ENCODE measurements at regions of chr17 and their contacts with region 1.

Region 1: DNA sequence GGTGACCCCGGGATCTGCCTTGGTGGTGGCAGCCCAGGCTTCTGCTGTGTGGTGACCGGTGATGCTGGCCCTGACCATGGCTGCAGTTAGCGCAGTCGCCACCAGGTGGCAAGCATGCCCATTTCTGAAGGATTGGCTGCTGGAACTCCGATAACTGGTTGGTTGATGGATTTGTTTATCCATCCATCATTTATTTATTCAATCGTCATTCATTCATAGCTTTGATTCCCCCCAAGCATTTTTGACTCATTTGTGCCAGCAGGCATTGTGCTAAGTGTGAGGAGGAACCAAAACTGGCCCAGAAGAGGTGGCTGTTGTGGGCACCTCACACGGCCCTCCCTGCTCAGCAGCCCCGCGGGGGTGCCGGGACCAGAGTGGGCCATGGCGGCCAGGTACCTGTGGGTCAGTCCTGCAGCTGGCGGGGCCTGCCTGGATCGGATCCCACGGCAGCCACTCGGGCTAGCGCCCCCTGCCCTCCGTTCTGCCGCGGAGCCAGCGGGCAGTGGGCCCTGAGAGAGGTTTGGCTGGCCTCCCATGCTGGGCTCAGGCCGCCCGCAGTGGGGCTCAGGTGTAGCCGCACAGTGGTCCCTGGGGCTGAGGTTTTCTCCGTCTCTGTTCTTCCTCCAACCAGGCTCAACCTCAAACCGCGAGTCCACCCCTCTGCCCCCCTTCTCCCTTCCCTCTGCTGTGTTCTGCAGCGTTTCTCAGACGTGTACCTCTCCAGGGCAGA is 28.8 kb upstream of the ITGA3 start:
- DNase-seq: peak; percentile 88
- H3K4me3 ChIP-seq: peak overlapping the region in 2 of 4 donors; percentile 13 to 18
- H3K27ac ChIP-seq: peak overlapping the region in 3 of 4 donors; percentile 15 to 58 (median 50)
- H3K4me1 ChIP-seq: peaks cover 0 to 15% (median 9%) of the 10 kb centered on the region in 4 donors
- H3K27me3 ChIP-seq: no peaks in the 10 kb centered on the region
- CTCF ChIP-seq: peak; percentile 94 to 98 (median 96)
- EP300 ChIP-seq: no peak
- POLR2A ChIP-seq: no peak

Region 2: DNA sequence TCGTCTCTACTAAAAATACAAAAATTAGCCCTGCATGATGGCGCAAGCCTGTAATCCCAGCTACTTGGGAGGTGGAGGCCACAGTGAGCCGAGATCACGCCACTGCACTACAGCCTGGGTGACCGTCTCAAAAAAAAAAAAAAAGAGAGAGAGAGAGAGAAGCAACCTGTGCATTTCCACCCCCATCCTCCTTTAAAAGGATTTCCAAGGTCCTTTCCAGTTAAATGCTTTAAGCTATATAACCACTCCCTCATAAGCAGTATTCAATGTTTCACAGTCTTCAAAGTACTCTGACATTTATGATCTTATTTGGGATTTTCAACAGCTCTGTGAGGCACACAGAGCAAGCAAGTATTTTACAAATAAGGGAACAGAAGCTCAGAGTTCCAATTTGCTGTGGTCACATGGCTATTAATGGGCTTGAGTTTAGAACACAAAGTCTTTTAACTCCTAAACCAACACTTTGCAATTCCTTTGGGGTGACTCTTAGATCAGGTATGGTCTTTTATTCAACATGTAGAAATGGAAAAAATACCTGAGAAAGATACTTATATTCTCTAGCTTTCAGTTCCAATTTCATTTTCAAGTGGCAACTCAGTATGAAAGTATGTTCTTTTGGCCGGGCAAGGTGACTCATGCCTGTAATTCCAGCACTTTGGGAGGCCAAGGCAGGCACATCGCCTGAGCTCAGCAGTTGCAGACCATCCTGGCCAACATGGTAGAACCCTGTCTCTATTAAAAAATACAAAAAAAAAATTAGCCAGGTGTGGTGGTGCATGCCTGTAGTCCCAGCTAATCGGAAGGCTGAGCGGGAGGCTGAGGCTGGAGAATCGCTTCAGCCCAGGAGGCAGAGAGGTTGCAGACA is 380.4 kb before region 1 on chr17:
- in situ Hi-C with region 1: no loop called
- intact Hi-C with region 1: no loop called
- DNase-seq: peak; percentile 24
- H3K4me3 ChIP-seq: peak overlapping the region in 1 of 4 donors; percentile 20
- H3K27ac ChIP-seq: peak overlapping the region; percentile 74 to 85 (median 81)
- H3K4me1 ChIP-seq: peaks cover 0 to 34% (median 14%) of the 10 kb centered on the region in 4 donors
- H3K27me3 ChIP-seq: no peaks in the 10 kb centered on the region
- CTCF ChIP-seq: no peak
- EP300 ChIP-seq: peak; percentile 61
- POLR2A ChIP-seq: peak; percentile 24

Region 3: GRCh38 chr17:50087246-50087911 is 60.3 kb after region 1 on chr17:
- in situ Hi-C with region 1: loop called (anchors 5 to 10 kb)
- intact Hi-C with region 1: loop called (anchors 1 kb)
- DNase-seq: peak; percentile 78
- H3K4me3 ChIP-seq: no peak overlapping the region
- H3K27ac ChIP-seq: no peak overlapping the region
- H3K4me1 ChIP-seq: no peaks in the 10 kb centered on the region
- H3K27me3 ChIP-seq: no peaks in the 10 kb centered on the region
- CTCF ChIP-seq: peak; percentile 94 to 97 (median 96)
- EP300 ChIP-seq: no peak
- POLR2A ChIP-seq: no peak

Region 4: GRCh38 chr17:50094753-50095619 is 67.9 kb after region 1 on chr17 and contains the start of gene PDK2:
- in situ Hi-C with region 1: loop called in 1 of 4 experiments (anchors 5 kb)
- intact Hi-C with region 1: no loop called
- DNase-seq: peak; percentile 97
- H3K4me3 ChIP-seq: peak within 1 kb of the TSS; percentile 78 to 95 (median 84)
- H3K27ac ChIP-seq: peak within 1 kb of the TSS; percentile 88 to 94 (median 92)
- H3K4me1 ChIP-seq: peaks cover 24 to 46% (median 33%) of the 10 kb centered on the region in 4 donors
- H3K27me3 ChIP-seq: no peaks in the 10 kb centered on the region
- CTCF ChIP-seq: no peak
- EP300 ChIP-seq: no peak
- POLR2A ChIP-seq: peak; percentile 90
- total RNA-seq, gene PDK2: 84.6 to 292 (median 136) TPM

Measured in transverse colon (tissue), 4 donors.